Naive thymus-derived CD4-positive, alpha-beta T cell (primary cell): ENCODE measurements at regions of chr14 and their contacts with region 1.

Region 1: GRCh38 chr14:22986508-22987054 is 4.2 kb upstream of the AJUBA start:
- DNase-seq: peak; percentile 65 to 87 (median 82)
- ATAC-seq: peak; percentile 79
- H3K4me3 ChIP-seq: no peak overlapping the region
- H3K4me3 Mint-ChIP-seq: no peak overlapping the region
- H3K27ac ChIP-seq: no peak overlapping the region
- H3K27ac Mint-ChIP-seq: peak overlapping the region in 4 of 9 donors; percentile 2 to 39 (median 24)
- H3K4me1 ChIP-seq: peaks cover 0 to 8% of the 10 kb centered on the region in 2 donors
- H3K4me1 Mint-ChIP-seq: peaks cover 0 to 5% (median 0%) of the 10 kb centered on the region in 7 donors
- H3K27me3 ChIP-seq: no peaks in the 10 kb centered on the region
- H3K27me3 Mint-ChIP-seq: no peaks in the 10 kb centered on the region

Region 2: GRCh38 chr14:22872033-22872832 is 114.3 kb before region 1 on chr14:
- CTCF ChIA-PET with region 1: no interaction called
- POLR2A ChIA-PET with region 1: no interaction called
- intact Hi-C with region 1: loop called in 1 of 2 experiments (anchors 1 kb)
- DNase-seq: peak; percentile 55 to 76 (median 69)
- ATAC-seq: peak; percentile 57
- H3K4me3 ChIP-seq: peak overlapping the region; percentile 72
- H3K4me3 Mint-ChIP-seq: peak overlapping the region; percentile 87 to 98 (median 95)
- H3K27ac ChIP-seq: peak overlapping the region; percentile 86
- H3K27ac Mint-ChIP-seq: peak overlapping the region; percentile 83 to 98 (median 94)
- H3K4me1 ChIP-seq: peaks cover 20 to 33% of the 10 kb centered on the region in 2 donors
- H3K4me1 Mint-ChIP-seq: peaks cover 26 to 49% (median 29%) of the 10 kb centered on the region in 7 donors
- H3K27me3 ChIP-seq: no peaks in the 10 kb centered on the region
- H3K27me3 Mint-ChIP-seq: no peaks in the 10 kb centered on the region

Region 3: GRCh38 chr14:22939684-22940083 is 46.9 kb before region 1 on chr14:
- CTCF ChIA-PET with region 1: interaction called, 5 read pairs
- POLR2A ChIA-PET with region 1: no interaction called
- intact Hi-C with region 1: loop called in 1 of 2 experiments (anchors 1 kb)
- DNase-seq: no peak
- ATAC-seq: no peak
- H3K4me3 ChIP-seq: no peak overlapping the region
- H3K4me3 Mint-ChIP-seq: no peak overlapping the region
- H3K27ac ChIP-seq: no peak overlapping the region
- H3K27ac Mint-ChIP-seq: no peak overlapping the region
- H3K4me1 ChIP-seq: no peaks in the 10 kb centered on the region
- H3K4me1 Mint-ChIP-seq: peaks cover 0 to 2% (median 0%) of the 10 kb centered on the region in 7 donors
- H3K27me3 ChIP-seq: no peaks in the 10 kb centered on the region
- H3K27me3 Mint-ChIP-seq: no peaks in the 10 kb centered on the region

Region 4: GRCh38 chr14:22973217-22974032 is 13.2 kb before region 1 on chr14:
- CTCF ChIA-PET with region 1: interaction called, 165 read pairs
- POLR2A ChIA-PET with region 1: interaction called, 9 read pairs
- intact Hi-C with region 1: loop called (anchors 1 kb)
- DNase-seq: peak in 6 of 9 donors; percentile 28 to 46 (median 40)
- ATAC-seq: peak; percentile 73
- H3K4me3 ChIP-seq: no peak overlapping the region
- H3K4me3 Mint-ChIP-seq: no peak overlapping the region
- H3K27ac ChIP-seq: no peak overlapping the region
- H3K27ac Mint-ChIP-seq: no peak overlapping the region
- H3K4me1 ChIP-seq: no peaks in the 10 kb centered on the region
- H3K4me1 Mint-ChIP-seq: peaks cover 0 to 1% (median 0%) of the 10 kb centered on the region in 7 donors
- H3K27me3 ChIP-seq: no peaks in the 10 kb centered on the region
- H3K27me3 Mint-ChIP-seq: peaks cover 0 to 19% (median 0%) of the 10 kb centered on the region in 5 donors

Region 5: DNA sequence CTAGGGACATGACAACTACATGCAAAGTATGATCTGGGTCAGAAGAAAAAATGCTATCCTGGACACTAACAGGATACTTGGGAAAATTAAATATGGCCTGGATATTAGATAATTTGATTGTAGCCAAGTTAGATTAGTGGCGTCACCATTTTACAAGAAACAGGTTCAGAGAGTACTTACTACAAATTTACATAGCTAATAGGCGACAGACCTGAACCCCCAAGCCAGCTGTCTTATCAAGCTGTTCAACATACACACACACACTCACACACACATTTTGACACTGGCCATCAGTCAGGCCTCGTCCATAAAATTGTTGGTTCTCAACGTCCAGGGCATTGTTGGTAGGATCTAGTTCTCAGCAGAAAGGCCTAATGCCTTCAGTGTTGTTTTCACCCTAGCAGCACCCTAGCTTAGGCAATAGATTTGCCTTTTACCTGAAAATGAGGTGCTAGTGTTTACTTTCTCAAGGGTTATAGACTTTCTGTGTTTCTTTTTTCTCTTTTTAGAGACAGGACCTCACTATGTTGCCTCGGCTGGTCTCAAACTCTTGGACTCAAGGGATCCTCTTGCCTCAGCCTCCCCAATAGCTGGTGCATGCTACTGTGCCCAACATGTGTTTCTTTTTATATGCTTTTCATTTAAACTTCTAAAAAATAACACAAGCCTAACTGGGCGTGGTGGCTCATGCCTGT is 26.6 kb after region 1 on chr14:
- CTCF ChIA-PET with region 1: no interaction called
- POLR2A ChIA-PET with region 1: no interaction called
- intact Hi-C with region 1: no loop called
- DNase-seq: no peak
- ATAC-seq: no peak
- H3K4me3 ChIP-seq: no peak overlapping the region
- H3K4me3 Mint-ChIP-seq: no peak overlapping the region
- H3K27ac ChIP-seq: no peak overlapping the region
- H3K27ac Mint-ChIP-seq: peak overlapping the region in 8 of 9 donors; percentile 2 to 58 (median 14)
- H3K4me1 ChIP-seq: peaks cover 3 to 18% of the 10 kb centered on the region in 2 donors
- H3K4me1 Mint-ChIP-seq: peaks cover 12 to 43% (median 37%) of the 10 kb centered on the region in 7 donors
- H3K27me3 ChIP-seq: no peaks in the 10 kb centered on the region
- H3K27me3 Mint-ChIP-seq: no peaks in the 10 kb centered on the region

Region 6: GRCh38 chr14:23025151-23025814 is 38.7 kb after region 1 on chr14:
- CTCF ChIA-PET with region 1: interaction called, 8 read pairs
- POLR2A ChIA-PET with region 1: interaction called, 4 read pairs
- intact Hi-C with region 1: loop called (anchors 5 kb)
- DNase-seq: no peak
- ATAC-seq: no peak
- H3K4me3 ChIP-seq: no peak overlapping the region
- H3K4me3 Mint-ChIP-seq: peak overlapping the region; percentile 4 to 78 (median 50)
- H3K27ac ChIP-seq: no peak overlapping the region
- H3K27ac Mint-ChIP-seq: peak overlapping the region; percentile 23 to 94 (median 86)
- H3K4me1 ChIP-seq: peaks cover 0 to 72% of the 10 kb centered on the region in 2 donors
- H3K4me1 Mint-ChIP-seq: peaks cover 49 to 83% (median 75%) of the 10 kb centered on the region in 7 donors
- H3K27me3 ChIP-seq: no peaks in the 10 kb centered on the region
- H3K27me3 Mint-ChIP-seq: no peaks in the 10 kb centered on the region

Region 7: DNA sequence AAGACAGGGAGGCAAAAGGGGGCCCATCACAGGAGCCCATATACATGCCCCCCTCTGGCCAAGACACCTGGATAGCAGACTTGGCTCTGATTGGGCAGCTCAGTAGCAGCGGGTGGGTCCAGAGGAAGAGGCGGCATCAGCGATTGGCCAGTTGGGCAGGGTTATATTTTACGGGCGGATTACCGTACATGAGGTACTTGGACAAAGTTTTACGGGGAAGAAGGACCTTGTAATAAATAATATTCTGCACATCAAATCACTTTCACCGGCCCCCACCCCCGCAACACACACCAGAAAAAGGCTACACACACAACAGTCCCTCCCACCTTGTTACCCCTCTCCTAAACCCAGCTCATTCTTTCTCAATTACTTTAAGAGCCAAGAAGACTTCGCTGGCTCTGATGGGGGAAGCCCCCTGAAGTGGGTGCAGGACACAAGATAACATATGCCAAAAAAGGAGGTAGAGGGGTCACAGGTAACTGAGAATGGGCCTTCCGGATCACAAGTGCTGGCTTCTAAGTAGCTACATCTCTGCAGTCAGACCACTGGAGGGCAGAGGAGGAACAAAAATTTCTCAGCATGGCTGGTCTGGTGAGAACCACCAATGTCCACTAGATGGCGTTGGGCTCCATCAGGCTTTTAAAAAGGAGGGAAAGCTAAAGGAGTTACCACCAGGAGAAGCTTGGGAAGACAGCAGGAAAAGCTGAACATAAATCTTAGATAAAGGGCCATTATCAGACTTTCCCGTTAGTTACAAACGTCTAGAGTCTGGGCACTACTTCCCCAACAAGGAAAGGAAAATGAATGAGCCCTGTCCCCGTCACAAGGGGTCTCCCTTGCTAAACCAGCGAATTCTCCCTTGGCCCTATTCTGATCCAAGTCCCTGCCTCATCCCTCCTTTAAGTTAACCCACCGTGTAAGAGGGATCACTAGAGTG is 82.2 kb after region 1 on chr14:
- CTCF ChIA-PET with region 1: interaction called, 264 read pairs
- POLR2A ChIA-PET with region 1: interaction called, 4 read pairs
- intact Hi-C with region 1: no loop called
- DNase-seq: peak; percentile 37 to 83 (median 74)
- ATAC-seq: peak; percentile 90
- H3K4me3 ChIP-seq: no peak overlapping the region
- H3K4me3 Mint-ChIP-seq: peak overlapping the region in 7 of 10 donors; percentile 56 to 76 (median 64)
- H3K27ac ChIP-seq: no peak overlapping the region
- H3K27ac Mint-ChIP-seq: peak overlapping the region; percentile 63 to 88 (median 78)
- H3K4me1 ChIP-seq: peaks cover 16 to 28% of the 10 kb centered on the region in 2 donors
- H3K4me1 Mint-ChIP-seq: peaks cover 30 to 58% (median 46%) of the 10 kb centered on the region in 7 donors
- H3K27me3 ChIP-seq: no peaks in the 10 kb centered on the region
- H3K27me3 Mint-ChIP-seq: no peaks in the 10 kb centered on the region